ENCODE measurements at regions of chr13 and their contacts with region 1.

Region 1: GRCh38 chr13:100514788-100515409 is 73.7 kb downstream of the GGACT start:
- DNase-seq: peak; percentile 79
- ATAC-seq: peak; percentile 97
- H3K4me3 Mint-ChIP-seq: no peak overlapping the region
- H3K27ac Mint-ChIP-seq: no peak overlapping the region
- H3K4me1 Mint-ChIP-seq: peaks cover 3% of the 10 kb centered on the region
- H3K27me3 Mint-ChIP-seq: no peaks in the 10 kb centered on the region

Region 2: GRCh38 chr13:99898421-99898820 is 616.5 kb before region 1 on chr13:
- CTCF ChIA-PET with region 1: interaction called, 19 read pairs
- POLR2A ChIA-PET with region 1: no interaction called
- DNase-seq: no peak
- ATAC-seq: no peak
- H3K4me3 Mint-ChIP-seq: no peak overlapping the region
- H3K27ac Mint-ChIP-seq: no peak overlapping the region
- H3K4me1 Mint-ChIP-seq: peaks cover 18% of the 10 kb centered on the region
- H3K27me3 Mint-ChIP-seq: peaks cover 68% of the 10 kb centered on the region

Region 3: DNA sequence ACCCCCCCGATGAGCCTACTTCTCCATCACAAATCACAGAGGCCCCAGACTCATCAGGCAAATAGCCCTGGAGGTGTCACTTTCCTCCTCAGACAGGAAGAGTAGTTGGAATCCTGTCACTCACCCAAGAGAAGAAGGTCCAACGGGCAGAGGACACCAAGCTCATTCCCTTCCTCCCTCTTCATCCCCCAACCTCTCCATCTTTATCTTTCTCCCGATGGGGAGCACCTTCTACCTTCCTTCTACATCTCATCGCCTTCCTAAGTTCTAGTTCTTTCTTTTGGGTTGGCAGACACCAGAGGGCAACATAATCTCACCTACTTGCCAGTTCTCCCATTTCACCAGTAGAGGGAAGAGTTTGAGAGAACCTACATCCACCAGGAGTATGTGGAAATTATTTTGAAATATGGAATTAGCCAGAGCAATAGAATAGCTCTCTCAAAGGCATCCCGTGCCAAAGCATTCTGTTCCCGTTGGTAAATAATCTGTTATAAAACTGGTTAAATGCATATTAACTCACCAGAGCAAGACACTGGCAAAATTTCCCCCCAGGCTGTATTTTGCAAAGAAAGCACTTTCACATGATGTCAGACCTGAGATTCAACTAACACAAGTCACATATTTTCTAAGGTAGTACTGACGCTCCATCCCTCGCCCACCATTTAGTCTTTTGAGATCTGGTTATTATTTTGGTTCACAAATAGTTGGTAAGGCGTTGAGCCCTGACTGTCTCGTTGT is 598.4 kb before region 1 on chr13:
- CTCF ChIA-PET with region 1: interaction called, 17 read pairs
- POLR2A ChIA-PET with region 1: no interaction called
- DNase-seq: peak; percentile 42
- ATAC-seq: peak; percentile 69
- H3K4me3 Mint-ChIP-seq: no peak overlapping the region
- H3K27ac Mint-ChIP-seq: no peak overlapping the region
- H3K4me1 Mint-ChIP-seq: peaks cover 26% of the 10 kb centered on the region
- H3K27me3 Mint-ChIP-seq: peaks cover 24% of the 10 kb centered on the region

Region 4: GRCh38 chr13:100392709-100393641 is 121.9 kb before region 1 on chr13:
- CTCF ChIA-PET with region 1: interaction called, 10 read pairs
- POLR2A ChIA-PET with region 1: no interaction called
- DNase-seq: peak; percentile 68
- ATAC-seq: peak; percentile 91
- H3K4me3 Mint-ChIP-seq: no peak overlapping the region
- H3K27ac Mint-ChIP-seq: peak overlapping the region; percentile 30
- H3K4me1 Mint-ChIP-seq: peaks cover 31% of the 10 kb centered on the region
- H3K27me3 Mint-ChIP-seq: no peaks in the 10 kb centered on the region

Region 5: GRCh38 chr13:100473087-100473486 is 41.8 kb before region 1 on chr13:
- CTCF ChIA-PET with region 1: no interaction called
- POLR2A ChIA-PET with region 1: no interaction called
- DNase-seq: no peak
- ATAC-seq: no peak
- H3K4me3 Mint-ChIP-seq: no peak overlapping the region
- H3K27ac Mint-ChIP-seq: no peak overlapping the region
- H3K4me1 Mint-ChIP-seq: peaks cover 4% of the 10 kb centered on the region
- H3K27me3 Mint-ChIP-seq: no peaks in the 10 kb centered on the region

Region 6: DNA sequence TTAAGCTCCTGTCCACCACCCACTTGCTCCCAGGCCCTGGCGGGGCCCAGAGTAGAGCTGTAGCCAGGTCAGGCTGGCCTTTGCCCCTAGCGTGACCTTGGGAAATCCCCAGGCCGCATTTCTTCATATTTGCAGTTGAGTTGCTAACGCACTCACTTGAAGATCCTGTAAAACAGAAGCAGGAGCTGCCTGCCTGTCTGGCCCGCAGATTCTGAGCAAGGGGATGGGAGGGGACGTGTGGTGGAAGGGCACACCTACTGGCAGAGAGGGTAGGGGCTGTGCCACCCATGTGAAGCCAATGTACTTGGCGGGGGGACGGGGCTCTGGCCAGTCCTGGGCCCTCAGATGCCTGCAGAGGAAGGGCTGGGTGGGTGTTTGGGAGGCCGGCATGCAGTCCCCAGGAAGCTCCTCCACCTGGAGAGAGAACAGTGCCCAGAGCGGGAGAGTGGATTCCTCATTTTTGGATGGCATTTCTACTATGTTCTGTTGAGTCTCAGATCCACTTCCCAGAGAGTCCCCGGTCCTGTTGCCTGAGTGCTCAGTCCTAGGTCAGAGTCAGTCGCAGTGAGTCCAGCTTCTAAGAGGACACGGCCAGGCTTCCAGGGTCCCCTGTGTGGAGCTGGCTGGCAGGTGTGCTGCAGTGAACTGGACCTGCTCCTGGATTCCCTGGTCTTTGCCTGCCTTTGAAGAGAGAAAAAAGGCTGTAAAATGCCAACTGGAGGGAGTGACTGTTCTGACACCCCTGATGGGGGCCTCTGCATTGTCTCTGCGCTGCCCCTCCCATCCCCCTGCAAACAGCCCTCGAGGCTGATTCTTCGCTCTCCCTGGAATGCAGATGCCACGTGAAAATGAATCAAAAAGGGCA is 10.8 kb after region 1 on chr13:
- CTCF ChIA-PET with region 1: interaction called, 12 read pairs
- POLR2A ChIA-PET with region 1: no interaction called
- DNase-seq: no peak
- ATAC-seq: no peak
- H3K4me3 Mint-ChIP-seq: no peak overlapping the region
- H3K27ac Mint-ChIP-seq: no peak overlapping the region
- H3K4me1 Mint-ChIP-seq: peaks cover 14% of the 10 kb centered on the region
- H3K27me3 Mint-ChIP-seq: no peaks in the 10 kb centered on the region

Region 7: GRCh38 chr13:100560498-100561157 is 45.7 kb after region 1 on chr13:
- CTCF ChIA-PET with region 1: no interaction called
- POLR2A ChIA-PET with region 1: no interaction called
- DNase-seq: no peak
- ATAC-seq: no peak
- H3K4me3 Mint-ChIP-seq: no peak overlapping the region
- H3K27ac Mint-ChIP-seq: no peak overlapping the region
- H3K4me1 Mint-ChIP-seq: peaks cover 5% of the 10 kb centered on the region
- H3K27me3 Mint-ChIP-seq: peaks cover 2% of the 10 kb centered on the region